ENCODE measurements at regions of chr10 and their contacts with region 1.

Region 1: DNA sequence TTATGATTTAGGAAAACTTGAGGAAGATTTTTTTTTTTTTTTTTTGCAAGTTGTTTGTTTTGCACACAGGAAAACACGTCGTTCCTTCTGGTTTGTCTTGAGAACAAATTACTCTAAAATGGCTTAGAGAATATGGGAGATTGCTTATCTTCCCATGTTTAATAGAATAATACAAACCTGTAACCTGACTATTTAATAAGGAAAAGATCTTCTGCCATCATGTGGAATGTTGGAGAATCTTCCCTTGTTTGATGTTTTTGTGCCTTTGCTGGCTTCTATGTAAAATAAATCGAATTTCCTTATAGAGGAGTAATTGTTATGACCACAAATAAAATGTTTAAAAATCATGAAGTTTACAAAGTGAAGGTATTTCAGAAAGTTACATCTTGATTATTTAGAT is 818.8 kb downstream of the GATA3 start:
- DNase-seq: no peak
- ATAC-seq: no peak
- H3K4me3 ChIP-seq: no peak overlapping the region
- H3K27ac ChIP-seq: no peak overlapping the region
- H3K4me1 ChIP-seq: no peaks in the 10 kb centered on the region
- H3K27me3 ChIP-seq: no peaks in the 10 kb centered on the region
- CTCF ChIP-seq: no peak
- POLR2A ChIP-seq: no peak
- RAD21 ChIP-seq: no peak

Region 2: GRCh38 chr10:8477300-8477699 is 396.0 kb before region 1 on chr10:
- CTCF ChIA-PET with region 1: no interaction called
- POLR2A ChIA-PET with region 1: no interaction called
- dilution Hi-C with region 1: no loop called
- in situ Hi-C with region 1: no loop called
- intact Hi-C with region 1: loop called (anchors 5 kb)
- DNase-seq: no peak
- ATAC-seq: no peak
- H3K4me3 ChIP-seq: no peak overlapping the region
- H3K27ac ChIP-seq: no peak overlapping the region
- H3K4me1 ChIP-seq: no peaks in the 10 kb centered on the region
- H3K27me3 ChIP-seq: no peaks in the 10 kb centered on the region
- CTCF ChIP-seq: no peak
- POLR2A ChIP-seq: no peak
- RAD21 ChIP-seq: no peak

Region 3: GRCh38 chr10:8776926-8777622 is 96.2 kb before region 1 on chr10:
- CTCF ChIA-PET with region 1: no interaction called
- POLR2A ChIA-PET with region 1: no interaction called
- dilution Hi-C with region 1: no loop called
- in situ Hi-C with region 1: no loop called
- intact Hi-C with region 1: no loop called
- DNase-seq: no peak
- ATAC-seq: no peak
- H3K4me3 ChIP-seq: no peak overlapping the region
- H3K27ac ChIP-seq: no peak overlapping the region
- H3K4me1 ChIP-seq: no peaks in the 10 kb centered on the region
- H3K27me3 ChIP-seq: no peaks in the 10 kb centered on the region
- CTCF ChIP-seq: no peak
- POLR2A ChIP-seq: no peak
- RAD21 ChIP-seq: no peak

Measured in IMR-90 (cell line).